ENCODE measurements at regions of chr1 and their contacts with region 1.

Region 1: GRCh38 chr1:165597883-165598675 is 33.0 kb upstream of the MGST3 start:
- DNase-seq: peak; percentile 97 to 99 (median 98)
- ATAC-seq: peak; percentile 99 to 100 (median 99)
- H3K4me3 ChIP-seq: peak overlapping the region; percentile 12 to 71 (median 60)
- H3K27ac ChIP-seq: peak overlapping the region in 11 of 12 donors; percentile 17 to 75 (median 45)
- H3K4me1 ChIP-seq: peaks cover 0 to 26% (median 7%) of the 10 kb centered on the region in 12 donors
- H3K27me3 ChIP-seq: peaks cover 0 to 38% (median 0%) of the 10 kb centered on the region in 9 donors
- CTCF ChIP-seq: no peak
- POLR2A ChIP-seq: peak in 1 of 2 donors; percentile 15

Region 2: DNA sequence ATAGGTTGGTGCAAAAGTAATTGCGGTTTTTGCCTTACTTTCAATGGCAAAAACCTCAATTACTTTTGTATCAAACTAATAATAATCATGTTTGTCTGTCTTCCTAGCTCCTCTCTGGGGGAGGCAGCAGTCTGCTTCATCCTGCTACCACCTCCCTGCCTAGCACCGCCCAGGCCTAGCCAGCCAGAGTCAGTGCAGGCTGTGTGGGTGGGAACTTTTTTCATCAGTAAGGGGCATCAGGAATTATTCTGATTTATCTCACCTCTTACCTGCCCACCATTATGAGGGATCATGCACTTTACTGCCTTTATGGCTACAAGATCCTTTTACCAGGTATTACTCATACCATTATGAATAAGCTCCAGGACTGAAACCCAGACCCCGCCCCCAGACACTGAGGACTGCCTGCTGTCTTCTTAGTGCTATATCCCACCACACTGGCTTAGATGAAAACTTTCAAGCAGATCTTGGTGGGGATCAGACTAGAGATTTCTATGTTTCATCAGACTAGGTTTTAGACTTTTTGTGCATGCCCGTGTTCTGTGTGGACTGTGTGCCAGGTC is 922.7 kb before region 1 on chr1:
- intact Hi-C with region 1: no loop called
- DNase-seq: no peak
- ATAC-seq: peak in 2 of 4 donors; percentile 20 to 29
- H3K4me3 ChIP-seq: no peak overlapping the region
- H3K27ac ChIP-seq: no peak overlapping the region
- H3K4me1 ChIP-seq: peaks cover 0 to 31% (median 6%) of the 10 kb centered on the region in 12 donors
- H3K27me3 ChIP-seq: no peaks in the 10 kb centered on the region
- CTCF ChIP-seq: no peak
- POLR2A ChIP-seq: no peak

Region 3: DNA sequence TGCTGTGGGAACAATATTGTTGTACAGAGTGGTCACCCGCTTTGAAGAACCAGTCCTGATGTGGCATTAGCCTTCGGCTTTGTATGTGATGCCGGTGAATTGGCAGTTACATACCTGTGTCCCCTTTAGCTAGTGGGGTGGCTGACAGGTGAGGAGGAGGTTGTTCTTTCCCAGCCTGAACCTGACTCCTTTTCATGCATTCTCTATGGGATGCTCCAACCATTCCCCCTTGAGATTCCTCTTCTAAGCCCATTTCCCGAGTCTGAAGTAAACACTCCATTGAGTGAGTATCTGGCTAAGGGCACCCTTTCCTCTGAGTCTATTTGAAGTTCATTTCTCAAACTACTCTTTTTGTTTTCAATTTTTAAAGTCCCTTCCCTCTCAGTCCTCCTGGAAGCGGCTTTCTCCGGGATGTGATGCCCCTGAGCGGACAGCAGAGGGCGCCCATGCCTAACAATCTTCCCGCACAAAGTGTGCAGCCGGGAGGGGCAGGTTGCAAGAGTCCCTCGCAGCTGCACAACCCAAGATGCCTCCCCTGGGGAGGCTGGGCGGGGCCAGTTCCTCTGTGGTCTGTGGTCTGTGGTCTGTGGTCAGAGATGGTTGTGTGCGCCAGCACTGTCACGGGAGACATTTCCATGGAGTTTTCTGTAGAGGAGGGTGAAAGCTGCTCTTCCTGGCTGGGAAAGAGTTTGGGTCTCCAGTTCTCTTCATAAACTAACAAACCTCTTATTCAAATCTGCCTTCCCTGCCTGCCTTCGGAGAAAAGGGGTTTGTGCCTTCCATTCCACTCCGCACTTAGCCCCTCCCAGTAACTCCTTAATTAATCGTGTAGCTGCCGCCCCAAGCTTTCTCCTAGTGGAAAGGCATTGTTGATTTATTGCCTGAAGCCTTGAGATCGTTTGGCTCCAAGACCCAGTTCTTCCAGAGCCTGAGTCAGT is 205.2 kb before region 1 on chr1:
- intact Hi-C with region 1: loop called in 5 of 10 experiments (anchors 1 to 2 kb)
- DNase-seq: peak; percentile 84 to 91 (median 88)
- ATAC-seq: peak; percentile 91 to 94 (median 93)
- H3K4me3 ChIP-seq: peak overlapping the region in 7 of 12 donors; percentile 6 to 33 (median 11)
- H3K27ac ChIP-seq: peak overlapping the region in 3 of 12 donors; percentile 6 to 15 (median 10)
- H3K4me1 ChIP-seq: peaks cover 0 to 18% (median 6%) of the 10 kb centered on the region in 12 donors
- H3K27me3 ChIP-seq: peaks cover 0 to 59% (median 0%) of the 10 kb centered on the region in 9 donors
- CTCF ChIP-seq: peak; percentile 87 to 98 (median 96)
- POLR2A ChIP-seq: no peak

Region 4: DNA sequence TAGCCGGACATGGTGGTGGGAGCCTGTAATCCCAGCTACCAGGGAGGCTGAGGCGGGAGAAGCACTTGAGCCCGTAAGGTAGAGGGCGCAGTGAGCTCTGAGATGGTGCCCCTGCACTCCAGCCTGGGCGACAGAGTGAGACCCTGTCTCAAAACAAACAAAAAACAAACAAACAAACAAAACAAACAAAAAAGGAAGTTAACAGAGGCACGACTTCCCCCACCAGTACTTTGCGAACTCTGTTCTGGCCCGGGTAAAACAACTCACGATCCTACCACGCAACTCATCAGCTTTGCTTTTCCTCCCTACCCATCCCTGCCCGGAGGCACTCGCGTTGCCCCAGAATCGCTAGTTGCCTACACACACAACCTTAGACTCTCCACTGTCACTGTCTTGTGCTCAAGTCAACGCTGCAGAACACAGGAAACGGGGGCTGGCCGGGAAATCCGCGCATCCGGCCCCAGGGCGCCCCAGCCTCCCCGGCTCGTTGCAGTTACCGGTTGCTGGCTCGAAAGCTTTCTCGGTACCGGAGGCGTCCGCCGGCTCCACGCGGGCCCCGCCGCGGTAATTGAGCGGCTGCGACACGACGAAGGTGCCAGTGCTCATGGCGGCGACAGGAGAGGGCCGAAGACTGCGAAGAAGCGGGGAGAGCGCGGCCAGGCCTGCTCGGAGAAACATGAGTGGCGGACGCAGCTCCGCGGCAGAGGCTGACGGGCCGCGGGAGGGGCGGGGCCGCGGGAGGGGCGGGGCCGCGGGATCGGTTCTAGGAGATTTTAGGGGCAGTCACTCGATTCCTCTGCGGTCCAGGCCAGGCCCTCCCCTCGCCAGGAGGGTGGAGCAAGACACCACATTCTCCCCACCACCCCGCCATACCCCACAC is 100.0 kb after region 1 on chr1 and contains the start of gene ALDH9A1:
- intact Hi-C with region 1: loop called in 7 of 10 experiments (anchors 2 to 10 kb)
- DNase-seq: peak; percentile 89 to 95 (median 92)
- ATAC-seq: peak; percentile 94 to 98 (median 96)
- H3K4me3 ChIP-seq: peak within 1 kb of the TSS; percentile 41 to 89 (median 70)
- H3K27ac ChIP-seq: peak within 1 kb of the TSS; percentile 80 to 98 (median 94)
- H3K4me1 ChIP-seq: peaks cover 0 to 31% (median 19%) of the 10 kb centered on the region in 12 donors
- H3K27me3 ChIP-seq: no peaks in the 10 kb centered on the region
- CTCF ChIP-seq: peak in 9 of 12 donors; percentile 7 to 52 (median 41)
- POLR2A ChIP-seq: peak in 1 of 2 donors; percentile 87
- total RNA-seq, gene ALDH9A1: 51.1 to 77.0 (median 66.1) TPM

Region 5: GRCh38 chr1:165768513-165769394 is 170.7 kb after region 1 on chr1 and contains the start of gene TMCO1:
- intact Hi-C with region 1: loop called in 2 of 10 experiments (anchors 10 kb)
- DNase-seq: peak; percentile 94 to 97 (median 96)
- ATAC-seq: peak; percentile 100
- H3K4me3 ChIP-seq: peak within 1 kb of the TSS; percentile 52 to 88 (median 76)
- H3K27ac ChIP-seq: peak within 1 kb of the TSS; percentile 64 to 94 (median 87)
- H3K4me1 ChIP-seq: peaks cover 5 to 46% (median 31%) of the 10 kb centered on the region in 12 donors
- H3K27me3 ChIP-seq: no peaks in the 10 kb centered on the region
- CTCF ChIP-seq: peak in 4 of 12 donors; percentile 12 to 39 (median 30)
- POLR2A ChIP-seq: peak in 1 of 2 donors; percentile 68
- total RNA-seq, gene TMCO1: 33.2 to 66.6 (median 54.3) TPM

Region 6: DNA sequence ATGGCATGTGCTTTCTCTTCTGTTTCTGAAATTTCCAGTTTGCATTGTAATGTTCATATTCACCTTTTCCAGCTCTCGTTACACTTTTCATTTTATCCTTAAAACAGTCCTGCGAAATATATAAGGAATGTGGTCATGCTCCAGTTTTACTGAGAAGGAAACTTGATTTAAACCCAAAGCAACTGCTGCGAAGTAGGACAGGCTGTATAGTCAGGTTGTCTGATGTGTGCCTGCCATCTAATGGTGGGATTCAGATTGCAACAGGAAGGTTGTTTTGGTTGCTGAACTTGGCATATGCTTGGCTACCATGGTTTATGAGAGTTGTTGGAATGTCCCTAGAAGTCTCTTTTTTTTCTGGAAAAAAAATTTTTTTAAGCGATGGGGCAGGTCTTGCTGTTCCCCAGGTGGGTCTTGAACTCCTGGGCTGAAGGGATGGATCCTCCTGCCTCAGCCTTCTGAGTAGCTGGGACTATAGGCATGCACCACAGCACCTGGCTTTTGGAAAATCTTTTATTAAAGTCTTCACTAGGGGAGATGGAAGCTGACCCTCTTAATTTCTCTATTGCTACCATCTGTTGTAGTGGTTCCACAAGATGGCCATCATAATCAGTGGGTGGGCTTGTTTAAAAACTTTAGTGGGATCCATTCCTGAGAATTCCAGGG is 316.2 kb after region 1 on chr1:
- intact Hi-C with region 1: loop called (anchors 1 to 10 kb)
- DNase-seq: peak in 2 of 5 donors; percentile 50 to 65
- ATAC-seq: peak; percentile 53 to 86 (median 78)
- H3K4me3 ChIP-seq: no peak overlapping the region
- H3K27ac ChIP-seq: no peak overlapping the region
- H3K4me1 ChIP-seq: peaks cover 0 to 20% (median 10%) of the 10 kb centered on the region in 12 donors
- H3K27me3 ChIP-seq: no peaks in the 10 kb centered on the region
- CTCF ChIP-seq: peak; percentile 75 to 94 (median 84)
- POLR2A ChIP-seq: no peak